Activated T-helper 1 cell treated with anti-CD3 and anti-CD28 coated beads, Interleukin-12 subunit alpha, Interleukin-12 subunit beta, Interleukin-2, Interleukin-4 antibody, amounts not matched to agents 30 ng/mL and 10 ng/mL and 1 ng/mL, durations not matched to agents 14 hours and 24 hours and 36 hours (primary cell): ENCODE measurements at regions of chr1 and their contacts with region 1.

Region 1: GRCh38 chr1:116878804-116879477 is 30.8 kb upstream of the PTGFRN start:
- DNase-seq: no peak
- H3K4me3 Mint-ChIP-seq: no peak overlapping the region
- H3K27ac Mint-ChIP-seq: no peak overlapping the region
- H3K4me1 Mint-ChIP-seq: peaks cover 21% of the 10 kb centered on the region
- H3K27me3 Mint-ChIP-seq: no peaks in the 10 kb centered on the region

Region 2: DNA sequence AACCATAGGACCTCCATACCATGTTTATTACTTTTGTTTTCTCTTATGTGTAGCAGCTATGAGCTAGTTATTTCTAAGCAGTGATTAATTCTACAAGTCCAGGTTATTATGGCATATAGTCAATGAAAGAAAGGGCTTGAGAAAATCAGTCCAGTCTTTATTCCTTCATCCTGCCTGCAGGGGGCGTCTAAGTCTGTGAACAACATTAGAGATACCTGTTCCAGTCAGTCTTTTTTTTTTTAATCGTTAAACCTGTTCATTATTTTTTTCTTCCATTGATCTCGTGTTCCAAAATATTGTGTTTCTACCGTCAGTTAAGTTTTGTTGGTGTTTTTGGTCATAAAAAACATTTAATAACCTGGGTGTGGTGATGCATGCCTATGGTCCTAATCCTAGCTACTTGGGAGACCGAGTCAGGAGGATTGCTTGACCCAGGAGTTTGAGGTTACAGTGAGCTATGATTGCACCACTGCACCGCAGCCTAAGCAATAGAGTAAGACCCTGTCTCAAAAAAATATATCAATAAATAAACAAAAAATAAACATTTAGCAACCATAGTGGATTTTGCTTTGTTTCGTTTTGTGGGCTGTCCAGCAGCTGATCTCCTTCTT is 154.1 kb before region 1 on chr1:
- intact Hi-C with region 1: loop called (anchors 1 kb)
- DNase-seq: peak; percentile 64
- H3K4me3 Mint-ChIP-seq: no peak overlapping the region
- H3K27ac Mint-ChIP-seq: no peak overlapping the region
- H3K4me1 Mint-ChIP-seq: peaks cover 43% of the 10 kb centered on the region
- H3K27me3 Mint-ChIP-seq: no peaks in the 10 kb centered on the region

Region 3: DNA sequence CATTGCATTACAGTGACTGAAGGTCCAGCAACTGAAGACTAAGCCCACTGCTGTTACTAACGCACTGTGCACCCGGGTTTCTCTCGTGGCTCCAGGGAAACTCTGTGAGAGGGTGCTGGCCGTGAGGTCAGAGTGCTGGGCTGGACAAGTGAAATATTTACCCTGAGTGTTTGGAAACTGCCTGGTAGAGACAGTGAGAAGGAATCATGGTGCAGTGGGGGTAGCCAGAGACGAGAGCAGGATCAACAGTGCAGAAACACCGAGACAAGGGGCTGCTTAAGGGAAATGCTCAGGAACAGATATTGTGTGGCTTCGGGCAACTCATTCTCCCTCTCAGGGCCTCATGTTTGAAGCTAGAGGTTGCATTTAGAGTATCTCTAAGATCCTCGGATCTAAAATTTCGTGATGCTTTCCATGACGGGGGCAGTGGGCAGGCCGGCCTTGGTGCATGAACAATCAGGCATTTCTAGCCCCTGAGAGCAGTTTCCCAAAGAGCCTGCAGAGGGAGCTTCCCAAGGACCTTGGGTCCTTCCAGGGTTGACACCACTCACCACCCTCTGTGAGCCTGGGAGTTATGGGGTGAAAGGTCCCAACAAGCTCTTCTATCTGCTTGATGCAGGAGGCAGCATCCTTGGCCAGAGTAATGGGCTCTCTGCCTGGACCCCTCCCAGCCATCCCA is 115.0 kb before region 1 on chr1:
- intact Hi-C with region 1: loop called (anchors 1 kb)
- DNase-seq: peak; percentile 50
- H3K4me3 Mint-ChIP-seq: peak overlapping the region; percentile 84
- H3K27ac Mint-ChIP-seq: peak overlapping the region; percentile 100
- H3K4me1 Mint-ChIP-seq: peaks cover 95% of the 10 kb centered on the region
- H3K27me3 Mint-ChIP-seq: peaks cover 3% of the 10 kb centered on the region

Region 4: GRCh38 chr1:116811321-116811720 is 67.6 kb before region 1 on chr1:
- intact Hi-C with region 1: loop called (anchors 2 kb)
- DNase-seq: no peak
- H3K4me3 Mint-ChIP-seq: no peak overlapping the region
- H3K27ac Mint-ChIP-seq: peak overlapping the region; percentile 64
- H3K4me1 Mint-ChIP-seq: peaks cover 89% of the 10 kb centered on the region
- H3K27me3 Mint-ChIP-seq: no peaks in the 10 kb centered on the region

Region 5: GRCh38 chr1:117054068-117054467 is 175.1 kb after region 1 on chr1:
- intact Hi-C with region 1: loop called (anchors 2 kb)
- DNase-seq: no peak
- H3K4me3 Mint-ChIP-seq: no peak overlapping the region
- H3K27ac Mint-ChIP-seq: no peak overlapping the region
- H3K4me1 Mint-ChIP-seq: peaks cover 44% of the 10 kb centered on the region
- H3K27me3 Mint-ChIP-seq: no peaks in the 10 kb centered on the region

Region 6: GRCh38 chr1:117674521-117675397 is 795.8 kb after region 1 on chr1:
- intact Hi-C with region 1: no loop called
- DNase-seq: peak; percentile 42
- H3K4me3 Mint-ChIP-seq: no peak overlapping the region
- H3K27ac Mint-ChIP-seq: no peak overlapping the region
- H3K4me1 Mint-ChIP-seq: peaks cover 18% of the 10 kb centered on the region
- H3K27me3 Mint-ChIP-seq: peaks cover 18% of the 10 kb centered on the region